ENCODE measurements at regions of chr6 and their contacts with region 1.

Region 1: GRCh38 chr6:88989215-88989614 is 25.8 kb upstream of the RNGTT start:
- DNase-seq: no peak
- ATAC-seq: no peak
- H3K4me3 ChIP-seq: no peak overlapping the region
- H3K27ac ChIP-seq: no peak overlapping the region
- H3K4me1 ChIP-seq: no peaks in the 10 kb centered on the region
- H3K27me3 ChIP-seq: no peaks in the 10 kb centered on the region

Region 2: GRCh38 chr6:88413459-88413858 is 575.8 kb before region 1 on chr6:
- intact Hi-C with region 1: no loop called
- DNase-seq: no peak
- ATAC-seq: no peak
- H3K4me3 ChIP-seq: no peak overlapping the region
- H3K27ac ChIP-seq: no peak overlapping the region
- H3K4me1 ChIP-seq: no peaks in the 10 kb centered on the region
- H3K27me3 ChIP-seq: no peaks in the 10 kb centered on the region

Region 3: DNA sequence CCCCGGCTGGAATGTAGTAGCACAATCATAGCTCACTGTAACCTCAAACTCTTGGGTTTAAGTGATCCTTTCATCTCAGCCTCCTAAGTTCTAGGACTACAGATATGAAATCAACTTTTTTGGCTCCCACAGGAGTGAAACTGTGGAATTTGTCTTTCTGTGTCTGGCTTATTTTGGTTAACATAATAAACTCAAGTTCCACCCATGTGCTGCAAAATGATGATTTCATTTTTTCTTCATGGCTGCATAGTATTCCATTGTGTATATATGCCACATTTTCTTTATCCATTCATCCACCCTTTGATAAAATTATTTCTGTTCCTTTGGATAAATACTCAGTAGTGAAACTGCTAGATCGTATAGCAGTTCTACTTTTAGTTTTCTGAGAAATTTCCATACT is 55.7 kb before region 1 on chr6:
- intact Hi-C with region 1: no loop called
- DNase-seq: no peak
- ATAC-seq: no peak
- H3K4me3 ChIP-seq: no peak overlapping the region
- H3K27ac ChIP-seq: no peak overlapping the region
- H3K4me1 ChIP-seq: no peaks in the 10 kb centered on the region
- H3K27me3 ChIP-seq: no peaks in the 10 kb centered on the region

Region 4: GRCh38 chr6:89035252-89036106 is 46.3 kb after region 1 on chr6:
- intact Hi-C with region 1: loop called (anchors 5 to 10 kb)
- DNase-seq: peak; percentile 89 to 90
- ATAC-seq: peak; percentile 94
- H3K4me3 ChIP-seq: no peak overlapping the region
- H3K27ac ChIP-seq: peak overlapping the region in 1 of 2 donors; percentile 82
- H3K4me1 ChIP-seq: peaks cover 0 to 6% of the 10 kb centered on the region in 2 donors
- H3K27me3 ChIP-seq: no peaks in the 10 kb centered on the region

Measured in aorta (tissue), 5 donors.